ENCODE measurements at regions of chr2 and their contacts with region 1.

Region 1: GRCh38 chr2:160493227-160494028 is at the start of gene RBMS1:
- DNase-seq: peak; percentile 57
- H3K4me3 Mint-ChIP-seq: peak within 1 kb of the TSS; percentile 82
- H3K27ac Mint-ChIP-seq: peak within 1 kb of the TSS; percentile 83
- H3K4me1 Mint-ChIP-seq: peaks cover 12% of the 10 kb centered on the region
- H3K27me3 Mint-ChIP-seq: peaks cover 12% of the 10 kb centered on the region
- CTCF ChIP-seq: no peak
- total RNA-seq, gene RBMS1: 65.4 and 66.8 TPM in 2 replicates

Region 2: DNA sequence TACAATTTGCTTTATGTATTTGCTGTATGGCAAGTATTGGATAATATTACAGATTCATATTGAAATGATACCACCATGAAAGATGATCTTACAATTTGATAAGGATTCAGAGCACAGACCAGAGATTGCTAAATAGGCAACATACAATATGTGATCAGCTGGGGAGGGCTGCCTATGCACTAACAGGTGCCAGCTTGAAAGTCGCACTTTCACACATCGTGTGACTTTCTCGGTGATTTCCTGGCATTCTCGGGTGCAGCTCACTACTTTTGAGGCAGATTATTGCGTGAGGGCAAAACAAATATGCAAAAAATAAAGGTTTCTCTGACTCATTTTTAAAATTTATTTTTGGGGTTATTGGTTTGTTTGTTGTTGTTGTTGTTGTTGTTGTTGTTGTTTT is 35.8 kb before region 1 on chr2:
- CTCF ChIA-PET with region 1: no interaction called
- POLR2A ChIA-PET with region 1: interaction called, 10 read pairs
- intact Hi-C with region 1: no loop called
- DNase-seq: no peak
- H3K4me3 Mint-ChIP-seq: no peak overlapping the region
- H3K27ac Mint-ChIP-seq: no peak overlapping the region
- H3K4me1 Mint-ChIP-seq: peaks cover 6% of the 10 kb centered on the region
- H3K27me3 Mint-ChIP-seq: no peaks in the 10 kb centered on the region
- CTCF ChIP-seq: no peak

Region 3: DNA sequence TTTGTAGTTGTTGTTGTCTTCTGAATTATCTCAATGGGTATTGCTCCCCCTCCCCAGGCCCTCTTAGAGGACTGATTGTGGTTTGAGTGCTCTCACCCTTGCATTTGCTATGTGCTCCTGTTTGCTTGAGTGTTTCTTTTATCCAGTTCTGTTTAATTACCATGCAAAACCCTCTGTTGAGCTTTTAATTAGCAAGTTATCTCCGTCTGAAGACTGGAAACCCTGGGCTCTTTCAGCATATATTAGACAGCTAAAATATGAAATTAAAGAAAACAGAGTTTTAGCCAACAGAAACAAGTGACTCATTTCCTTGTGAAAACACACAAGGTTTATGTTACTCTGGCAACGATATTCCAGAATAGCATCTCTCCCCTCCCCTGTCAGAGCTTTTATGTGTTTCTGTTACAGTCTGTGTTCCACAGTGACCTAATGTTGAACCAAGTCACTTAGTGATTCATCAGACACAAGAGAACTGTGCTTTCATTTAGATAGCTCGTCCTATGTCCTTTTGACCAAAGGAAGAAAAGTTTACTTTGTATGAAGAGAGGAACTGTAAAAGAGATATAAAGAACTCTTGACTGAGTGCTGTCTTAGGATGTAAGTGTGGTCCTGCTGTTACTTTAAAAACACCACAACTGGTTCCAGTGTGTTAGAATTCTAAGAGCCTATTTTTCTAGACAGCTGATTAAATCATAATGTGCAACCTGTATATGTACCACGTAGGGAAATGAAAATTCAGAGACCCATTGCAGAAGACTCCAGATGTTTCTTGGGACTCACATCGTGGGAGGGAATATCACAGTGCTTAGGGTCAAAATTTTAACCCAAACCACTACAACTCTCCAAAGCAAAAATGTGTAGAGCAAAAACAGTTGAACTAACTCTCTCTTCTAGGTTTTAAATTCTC is 173.0 kb after region 1 on chr2:
- CTCF ChIA-PET with region 1: interaction called, 3 read pairs
- POLR2A ChIA-PET with region 1: no interaction called
- intact Hi-C with region 1: loop called (anchors 10 kb)
- DNase-seq: peak; percentile 95
- H3K4me3 Mint-ChIP-seq: peak overlapping the region; percentile 36
- H3K27ac Mint-ChIP-seq: peak overlapping the region; percentile 6
- H3K4me1 Mint-ChIP-seq: peaks cover 35% of the 10 kb centered on the region
- H3K27me3 Mint-ChIP-seq: no peaks in the 10 kb centered on the region
- CTCF ChIP-seq: no peak

Region 4: GRCh38 chr2:160918906-160919503 is 425.6 kb after region 1 on chr2:
- CTCF ChIA-PET with region 1: no interaction called
- POLR2A ChIA-PET with region 1: interaction called, 4 read pairs
- intact Hi-C with region 1: loop called (anchors 2 kb)
- DNase-seq: peak; percentile 79
- H3K4me3 Mint-ChIP-seq: no peak overlapping the region
- H3K27ac Mint-ChIP-seq: no peak overlapping the region
- H3K4me1 Mint-ChIP-seq: no peaks in the 10 kb centered on the region
- H3K27me3 Mint-ChIP-seq: no peaks in the 10 kb centered on the region
- CTCF ChIP-seq: peak; percentile 71

Region 5: GRCh38 chr2:161522796-161523195 is 1029.4 kb after region 1 on chr2:
- CTCF ChIA-PET with region 1: no interaction called
- POLR2A ChIA-PET with region 1: no interaction called
- intact Hi-C with region 1: no loop called
- DNase-seq: no peak
- H3K4me3 Mint-ChIP-seq: no peak overlapping the region
- H3K27ac Mint-ChIP-seq: no peak overlapping the region
- H3K4me1 Mint-ChIP-seq: no peaks in the 10 kb centered on the region
- H3K27me3 Mint-ChIP-seq: peaks cover 60% of the 10 kb centered on the region
- CTCF ChIP-seq: no peak